ENCODE measurements at regions of chr17 and their contacts with region 1.

Region 1: DNA sequence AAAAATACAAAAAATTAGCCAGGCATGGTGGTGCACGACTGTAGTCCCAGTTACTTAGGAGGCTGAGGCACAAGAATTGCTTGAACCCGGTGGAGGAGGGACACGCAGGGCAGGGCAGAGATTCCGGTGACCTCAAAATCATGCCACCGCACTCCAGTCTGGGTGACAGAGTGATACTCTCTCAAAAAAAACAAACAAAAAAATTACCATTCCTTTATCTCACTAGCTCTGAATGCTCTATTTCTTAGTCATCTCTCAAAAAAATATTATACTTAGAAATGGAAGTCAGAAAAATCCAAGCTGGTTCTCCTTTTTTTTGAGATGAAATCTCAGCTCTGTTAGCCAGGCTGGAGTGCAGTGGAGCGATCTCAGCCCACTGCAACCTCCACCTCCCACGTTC is 40.8 kb downstream of the SPOP start:
- DNase-seq: no peak

Region 2: GRCh38 chr17:49694847-49695683 is 58.0 kb after region 1 on chr17:
- intact Hi-C with region 1: loop called (anchors 5 kb)
- DNase-seq: peak; percentile 82

Region 3: DNA sequence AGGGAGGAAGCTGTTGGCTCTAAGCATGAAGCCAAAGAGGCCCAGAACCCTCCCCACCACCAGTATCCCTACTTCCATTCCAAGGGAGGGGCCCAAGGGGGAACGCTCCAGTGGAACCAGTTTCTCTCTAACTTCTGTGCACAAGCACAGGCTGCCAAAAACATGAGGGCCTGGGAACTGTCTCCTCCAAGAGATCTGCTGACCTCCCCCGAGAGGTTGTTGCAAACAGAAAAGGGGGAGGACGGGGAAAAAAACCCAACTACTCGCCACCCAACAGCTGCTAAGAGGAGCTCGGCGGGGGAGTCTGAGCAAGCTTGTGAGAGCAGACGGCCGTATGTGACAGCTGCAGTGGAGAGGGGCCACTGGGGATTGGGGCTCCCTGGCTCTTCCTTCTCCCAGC is 86.4 kb after region 1 on chr17:
- intact Hi-C with region 1: no loop called
- DNase-seq: no peak